Calu3 (cell line): ENCODE measurements at regions of chr7 and their contacts with region 1.

Region 1: DNA sequence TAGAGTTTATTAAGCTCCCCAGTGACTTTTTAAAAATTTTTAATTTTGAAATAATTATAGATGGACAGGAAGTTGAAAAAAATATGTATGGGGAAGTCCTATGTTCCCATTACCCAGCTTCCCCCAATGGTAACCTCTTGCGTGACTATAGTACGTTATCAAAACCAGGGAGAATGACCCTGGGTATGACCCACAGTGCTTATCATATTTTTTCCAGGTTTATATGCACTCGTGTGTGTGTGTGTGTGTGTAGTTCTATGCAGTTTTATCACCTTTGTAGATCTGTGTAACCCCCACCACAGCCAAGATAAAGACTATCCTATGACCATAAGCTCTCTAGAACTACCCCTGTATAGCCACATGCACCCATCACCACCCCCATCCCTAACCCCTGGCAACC is 72.8 kb downstream of the TBXAS1 start:
- DNase-seq: no peak
- H3K4me3 Mint-ChIP-seq: no peak overlapping the region
- H3K27ac Mint-ChIP-seq: no peak overlapping the region
- H3K4me1 Mint-ChIP-seq: peaks cover 5% of the 10 kb centered on the region
- H3K27me3 Mint-ChIP-seq: no peaks in the 10 kb centered on the region
- CTCF ChIP-seq: no peak

Region 2: DNA sequence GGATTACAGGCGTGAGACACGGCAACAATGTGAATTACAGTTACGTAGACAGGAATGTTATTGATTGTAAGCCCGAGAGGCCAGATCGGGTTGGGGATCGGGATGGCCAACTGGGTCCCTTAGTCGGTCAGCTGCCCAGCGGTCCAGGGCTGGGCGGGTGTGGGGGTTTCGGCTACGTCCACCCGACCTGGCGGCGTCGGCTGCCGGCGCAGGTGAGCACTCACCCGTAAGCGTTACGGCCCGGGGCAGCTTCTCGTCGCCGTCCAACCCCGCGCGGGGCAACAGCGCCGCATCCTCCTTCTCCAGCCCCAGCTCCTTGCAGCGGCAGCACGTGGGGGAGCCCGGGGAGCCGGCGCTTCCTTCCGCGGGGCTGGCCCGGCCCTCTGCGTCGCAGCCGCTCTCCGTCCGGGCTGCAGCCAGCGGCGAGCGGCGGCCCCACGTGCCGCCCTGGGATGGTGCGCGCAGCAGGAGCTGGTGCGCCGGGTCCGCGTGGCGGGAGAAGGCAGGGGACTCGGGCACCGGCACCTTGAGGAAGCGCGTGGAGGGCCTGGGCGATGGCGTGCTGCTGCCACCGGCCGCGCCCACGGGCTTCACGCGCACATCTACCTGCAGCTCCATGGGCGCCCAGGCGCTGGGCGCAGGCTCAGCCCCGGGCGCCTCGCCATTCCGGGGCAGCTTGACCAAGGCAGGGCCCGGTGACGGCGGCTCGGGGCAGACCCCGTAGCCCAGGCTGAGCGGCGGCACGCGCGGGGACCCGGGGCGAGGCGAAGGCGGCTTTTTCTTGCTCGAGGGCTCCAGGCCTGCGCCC is 419.0 kb before region 1 on chr7:
- CTCF ChIA-PET with region 1: no interaction called
- intact Hi-C with region 1: no loop called
- DNase-seq: peak; percentile 50
- H3K4me3 Mint-ChIP-seq: peak overlapping the region; percentile 58
- H3K27ac Mint-ChIP-seq: no peak overlapping the region
- H3K4me1 Mint-ChIP-seq: no peaks in the 10 kb centered on the region
- H3K27me3 Mint-ChIP-seq: peaks cover 28% of the 10 kb centered on the region
- CTCF ChIP-seq: no peak

Region 3: GRCh38 chr7:139930286-139930965 is 28.5 kb after region 1 on chr7:
- CTCF ChIA-PET with region 1: no interaction called
- intact Hi-C with region 1: loop called (anchors 1 kb)
- DNase-seq: no peak
- H3K4me3 Mint-ChIP-seq: no peak overlapping the region
- H3K27ac Mint-ChIP-seq: no peak overlapping the region
- H3K4me1 Mint-ChIP-seq: peaks cover 13% of the 10 kb centered on the region
- H3K27me3 Mint-ChIP-seq: no peaks in the 10 kb centered on the region
- CTCF ChIP-seq: no peak